ENCODE measurements at regions of chr4 and their contacts with region 1.

Region 1: DNA sequence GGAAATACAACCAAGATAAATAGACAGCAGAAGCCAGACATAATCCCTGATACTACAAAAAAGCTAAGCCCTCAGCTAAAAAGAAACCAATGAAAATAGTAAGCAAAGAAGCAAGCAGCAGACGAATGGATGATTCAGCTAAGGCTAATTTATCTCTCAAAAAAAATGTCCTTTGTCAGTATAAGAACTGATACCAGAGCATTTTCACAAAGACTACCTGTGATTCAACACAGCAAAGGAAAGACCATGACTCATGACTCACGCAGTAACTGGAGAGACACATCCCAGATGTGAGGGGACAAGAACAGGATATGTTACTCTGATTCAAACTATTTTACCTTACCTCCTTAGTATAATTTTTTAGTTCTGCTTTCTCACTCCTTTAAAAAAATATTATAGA is 22.7 kb upstream of the TMPRSS11F start:
- DNase-seq: no peak
- CTCF ChIP-seq: no peak

Region 2: DNA sequence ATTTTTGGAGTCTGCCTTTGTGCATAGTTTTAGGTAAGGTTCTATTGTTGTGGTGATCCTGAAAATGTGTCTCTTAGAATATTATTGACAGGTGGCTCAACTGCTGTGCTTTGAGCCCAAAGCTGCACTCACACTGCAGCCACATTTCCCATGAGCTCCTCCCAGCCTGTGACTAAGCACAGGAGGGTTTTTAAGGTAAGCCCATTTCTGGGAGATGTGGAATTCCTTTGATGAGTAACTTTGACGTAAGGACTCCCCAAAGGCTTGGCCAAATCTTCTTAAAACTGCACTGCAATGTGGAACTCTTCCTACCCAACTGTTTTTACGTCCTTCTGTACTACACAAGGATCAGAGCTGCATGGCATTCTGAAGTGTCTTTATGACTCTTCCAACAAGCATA is 169.1 kb before region 1 on chr4:
- in situ Hi-C with region 1: loop called (anchors 25 kb)
- DNase-seq: no peak
- CTCF ChIP-seq: no peak

Measured in GM13976 (cell line).